Esophagus muscularis mucosa (tissue), 4 donors: ENCODE measurements at regions of chr3 and their contacts with region 1.

Region 1: GRCh38 chr3:100047455-100048141 is 66.7 kb downstream of the FILIP1L start:
- DNase-seq: no peak
- H3K4me3 ChIP-seq: peak overlapping the region in 2 of 4 donors; percentile 8 to 20
- H3K27ac ChIP-seq: peak overlapping the region; percentile 68 to 93 (median 84)
- H3K4me1 ChIP-seq: peaks cover 40 to 56% (median 47%) of the 10 kb centered on the region in 4 donors
- H3K27me3 ChIP-seq: no peaks in the 10 kb centered on the region
- CTCF ChIP-seq: no peak
- EP300 ChIP-seq: no peak
- POLR2A ChIP-seq: no peak

Region 2: DNA sequence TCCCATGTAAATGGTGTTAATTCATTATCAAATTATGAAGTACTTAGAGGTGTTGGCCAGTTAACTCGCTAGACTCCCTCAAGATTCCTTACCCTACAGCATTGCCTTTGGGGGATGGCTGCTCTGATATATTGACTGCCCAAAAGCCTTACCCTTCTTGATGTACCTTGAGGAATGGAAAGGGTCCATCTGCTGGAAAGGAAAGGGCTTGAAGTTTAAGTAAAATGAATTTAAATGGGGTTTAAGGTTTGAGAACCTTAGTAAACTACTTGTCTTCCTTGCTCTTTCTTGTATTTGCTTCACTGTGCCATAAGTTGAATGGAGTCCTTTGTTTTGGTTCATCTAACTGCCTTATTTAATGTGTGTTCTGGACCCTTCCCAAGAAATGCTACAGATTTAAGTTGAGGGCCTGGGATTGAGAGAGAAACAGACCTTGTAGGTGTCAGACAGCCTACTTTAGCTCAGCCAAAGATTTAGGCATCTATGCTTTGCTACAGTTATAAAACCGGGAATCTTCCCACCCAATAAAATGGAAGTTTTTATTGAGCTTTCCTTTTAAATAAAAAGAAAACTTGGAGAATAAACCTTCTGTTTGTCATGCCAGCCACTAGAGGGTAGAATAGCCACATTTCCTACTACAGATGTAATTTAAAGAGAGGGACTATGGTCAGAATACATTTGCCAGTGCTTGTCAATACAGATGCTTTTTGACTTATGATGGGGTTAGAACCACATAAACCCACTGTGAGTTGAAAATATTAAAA is 204.6 kb before region 1 on chr3:
- intact Hi-C with region 1: loop called (anchors 10 kb)
- DNase-seq: no peak
- H3K4me3 ChIP-seq: peak overlapping the region in 2 of 4 donors; percentile 4 to 24
- H3K27ac ChIP-seq: peak overlapping the region; percentile 78 to 85 (median 80)
- H3K4me1 ChIP-seq: peaks cover 49 to 55% (median 54%) of the 10 kb centered on the region in 4 donors
- H3K27me3 ChIP-seq: no peaks in the 10 kb centered on the region
- CTCF ChIP-seq: peak; percentile 74 to 85 (median 76)
- EP300 ChIP-seq: no peak
- POLR2A ChIP-seq: no peak

Region 3: GRCh38 chr3:99866261-99866761 is 181.3 kb before region 1 on chr3:
- intact Hi-C with region 1: loop called (anchors 5 kb)
- DNase-seq: no peak
- H3K4me3 ChIP-seq: peak overlapping the region in 1 of 4 donors; percentile 1
- H3K27ac ChIP-seq: peak overlapping the region; percentile 93 to 96 (median 94)
- H3K4me1 ChIP-seq: peaks cover 36 to 100% (median 97%) of the 10 kb centered on the region in 4 donors
- H3K27me3 ChIP-seq: no peaks in the 10 kb centered on the region
- CTCF ChIP-seq: no peak
- EP300 ChIP-seq: no peak
- POLR2A ChIP-seq: no peak